Activated CD4-positive, alpha-beta T cell treated with anti-CD3 and anti-CD28 coated beads for 36 hours (primary cell): ENCODE measurements at regions of chr1 and their contacts with region 1.

Region 1: GRCh38 chr1:161165742-161166668 is at the start of gene PPOX:
- DNase-seq: peak; percentile 96
- ATAC-seq: peak; percentile 97
- H3K4me3 Mint-ChIP-seq: peak within 1 kb of the TSS; percentile 87
- H3K27ac Mint-ChIP-seq: peak within 1 kb of the TSS; percentile 90
- H3K4me1 Mint-ChIP-seq: peaks cover 44% of the 10 kb centered on the region
- H3K27me3 Mint-ChIP-seq: no peaks in the 10 kb centered on the region
- total RNA-seq, gene PPOX: 21.5 to 28.8 TPM

Region 2: GRCh38 chr1:161153679-161154426 is 12.2 kb before region 1 on chr1 and contains the start of gene UFC1:
- CTCF ChIA-PET with region 1: interaction called, 20 read pairs
- POLR2A ChIA-PET with region 1: interaction called, 12 read pairs
- intact Hi-C with region 1: no loop called
- DNase-seq: peak; percentile 89
- ATAC-seq: peak; percentile 98
- H3K4me3 Mint-ChIP-seq: peak within 1 kb of the TSS; percentile 94
- H3K27ac Mint-ChIP-seq: peak within 1 kb of the TSS; percentile 99
- H3K4me1 Mint-ChIP-seq: peaks cover 20% of the 10 kb centered on the region
- H3K27me3 Mint-ChIP-seq: no peaks in the 10 kb centered on the region
- total RNA-seq, gene UFC1: 89.2 to 98.6 TPM

Region 3: GRCh38 chr1:161177112-161177935 is 11.3 kb after region 1 on chr1 and contains the start of gene B4GALT3:
- CTCF ChIA-PET with region 1: interaction called, 30 read pairs
- POLR2A ChIA-PET with region 1: interaction called, 13 read pairs
- intact Hi-C with region 1: loop called (anchors 1 kb)
- DNase-seq: peak; percentile 98
- ATAC-seq: peak; percentile 86
- H3K4me3 Mint-ChIP-seq: peak within 1 kb of the TSS; percentile 91
- H3K27ac Mint-ChIP-seq: peak within 1 kb of the TSS; percentile 98
- H3K4me1 Mint-ChIP-seq: peaks cover 57% of the 10 kb centered on the region
- H3K27me3 Mint-ChIP-seq: no peaks in the 10 kb centered on the region
- total RNA-seq, gene B4GALT3: 40.5 to 51.8 TPM

Region 4: GRCh38 chr1:161185282-161185682 is 19.3 kb after region 1 on chr1:
- CTCF ChIA-PET with region 1: interaction called, 30 read pairs
- POLR2A ChIA-PET with region 1: interaction called, 13 read pairs
- intact Hi-C with region 1: loop called in 1 of 2 experiments (anchors 1 kb)
- DNase-seq: peak; percentile 86
- ATAC-seq: peak; percentile 71
- H3K4me3 Mint-ChIP-seq: peak overlapping the region; percentile 50
- H3K27ac Mint-ChIP-seq: peak overlapping the region; percentile 90
- H3K4me1 Mint-ChIP-seq: peaks cover 79% of the 10 kb centered on the region
- H3K27me3 Mint-ChIP-seq: no peaks in the 10 kb centered on the region

Region 5: DNA sequence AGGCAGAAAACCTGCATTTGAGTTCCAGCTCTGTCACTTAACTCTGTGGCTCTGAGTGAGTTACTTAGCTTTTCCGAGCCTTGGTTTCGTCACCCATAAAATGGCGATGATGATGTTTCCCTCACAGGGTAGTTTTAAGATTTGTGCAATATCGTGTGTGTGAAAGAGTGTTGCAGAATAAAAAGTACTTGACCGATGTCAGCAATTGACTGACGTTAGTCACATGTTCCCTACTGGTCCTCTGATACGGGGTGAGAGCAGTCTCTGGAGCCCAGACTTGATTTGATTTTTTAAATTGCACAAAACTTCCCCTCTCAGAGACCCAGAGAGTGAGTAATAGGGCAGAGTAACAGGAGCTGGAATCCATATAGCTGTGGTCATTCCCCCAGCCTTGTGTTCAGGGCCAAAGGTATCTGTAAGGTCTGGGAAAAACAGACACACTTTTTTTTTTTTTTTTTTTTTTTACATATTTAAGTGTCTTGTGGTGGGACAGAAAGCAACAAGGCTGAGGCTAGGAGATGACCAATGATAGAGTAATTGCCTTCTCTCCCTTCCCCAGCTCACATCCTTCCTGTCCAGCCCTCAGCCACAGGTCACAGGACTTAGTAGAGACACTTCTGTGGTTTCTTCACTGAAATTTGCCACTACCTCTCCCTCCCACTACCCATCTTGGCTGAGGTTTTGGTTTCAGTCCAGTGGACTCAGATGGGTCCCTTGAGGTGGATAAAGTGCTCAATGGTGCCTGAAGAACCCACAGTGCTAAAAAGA is 51.1 kb after region 1 on chr1:
- CTCF ChIA-PET with region 1: interaction called, 10 read pairs
- POLR2A ChIA-PET with region 1: no interaction called
- intact Hi-C with region 1: no loop called
- DNase-seq: no peak
- ATAC-seq: peak; percentile 59
- H3K4me3 Mint-ChIP-seq: no peak overlapping the region
- H3K27ac Mint-ChIP-seq: peak overlapping the region; percentile 22
- H3K4me1 Mint-ChIP-seq: peaks cover 45% of the 10 kb centered on the region
- H3K27me3 Mint-ChIP-seq: no peaks in the 10 kb centered on the region

Region 6: DNA sequence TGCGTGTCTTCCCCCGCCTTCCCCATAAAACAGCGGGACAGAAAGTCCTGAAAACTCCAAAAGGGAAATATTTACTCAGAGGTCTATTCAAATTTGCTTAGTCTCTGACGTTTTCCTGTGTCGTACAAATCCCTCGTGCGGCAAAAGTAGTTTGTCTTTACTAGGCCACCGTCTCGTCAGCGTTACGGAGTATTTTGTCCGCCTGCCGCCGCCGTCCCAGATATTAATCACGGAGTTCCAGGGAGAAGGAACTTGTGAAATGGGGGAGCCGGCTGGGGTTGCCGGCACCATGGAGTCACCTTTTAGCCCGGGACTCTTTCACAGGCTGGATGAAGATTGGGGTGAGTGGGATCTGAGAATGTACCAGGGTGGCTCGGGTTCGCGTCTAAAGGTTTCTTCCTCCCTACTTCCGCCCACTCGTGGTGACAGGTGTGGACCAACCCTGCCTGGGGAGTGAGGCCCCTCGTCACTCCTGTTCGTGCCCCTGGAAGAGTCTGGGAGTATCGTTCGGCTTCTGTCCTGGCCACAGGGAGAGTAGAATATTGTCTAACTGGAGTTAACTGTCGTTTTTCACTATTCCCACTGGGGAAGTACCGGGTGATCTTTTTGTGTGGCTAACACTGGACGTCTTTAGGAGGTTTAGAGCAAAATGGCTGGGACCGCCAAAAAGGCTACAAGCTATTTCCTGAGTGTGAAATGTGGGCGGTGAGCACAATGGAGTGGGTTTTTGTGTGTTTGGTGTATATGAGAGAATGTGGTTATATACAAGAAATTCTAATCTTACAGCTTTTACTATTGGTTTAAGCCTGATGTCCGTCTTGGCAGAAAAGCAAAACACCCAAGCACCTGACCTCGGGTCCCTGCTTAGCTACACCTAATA is 600.3 kb after region 1 on chr1 and contains the start of gene ATF6:
- CTCF ChIA-PET with region 1: no interaction called
- POLR2A ChIA-PET with region 1: no interaction called
- intact Hi-C with region 1: no loop called
- DNase-seq: peak; percentile 89
- ATAC-seq: peak; percentile 68
- H3K4me3 Mint-ChIP-seq: peak within 1 kb of the TSS; percentile 96
- H3K27ac Mint-ChIP-seq: peak within 1 kb of the TSS; percentile 99
- H3K4me1 Mint-ChIP-seq: peaks cover 49% of the 10 kb centered on the region
- H3K27me3 Mint-ChIP-seq: no peaks in the 10 kb centered on the region
- total RNA-seq, gene ATF6: 23.7 to 31.9 TPM